GM10248 (cell line): ENCODE measurements at regions of chr22 and their contacts with region 1.

Region 1: GRCh38 chr22:29202212-29203192 is 3.2 kb upstream of the EMID1 start:
- DNase-seq: peak; percentile 91
- CTCF ChIP-seq: peak; percentile 49

Region 2: DNA sequence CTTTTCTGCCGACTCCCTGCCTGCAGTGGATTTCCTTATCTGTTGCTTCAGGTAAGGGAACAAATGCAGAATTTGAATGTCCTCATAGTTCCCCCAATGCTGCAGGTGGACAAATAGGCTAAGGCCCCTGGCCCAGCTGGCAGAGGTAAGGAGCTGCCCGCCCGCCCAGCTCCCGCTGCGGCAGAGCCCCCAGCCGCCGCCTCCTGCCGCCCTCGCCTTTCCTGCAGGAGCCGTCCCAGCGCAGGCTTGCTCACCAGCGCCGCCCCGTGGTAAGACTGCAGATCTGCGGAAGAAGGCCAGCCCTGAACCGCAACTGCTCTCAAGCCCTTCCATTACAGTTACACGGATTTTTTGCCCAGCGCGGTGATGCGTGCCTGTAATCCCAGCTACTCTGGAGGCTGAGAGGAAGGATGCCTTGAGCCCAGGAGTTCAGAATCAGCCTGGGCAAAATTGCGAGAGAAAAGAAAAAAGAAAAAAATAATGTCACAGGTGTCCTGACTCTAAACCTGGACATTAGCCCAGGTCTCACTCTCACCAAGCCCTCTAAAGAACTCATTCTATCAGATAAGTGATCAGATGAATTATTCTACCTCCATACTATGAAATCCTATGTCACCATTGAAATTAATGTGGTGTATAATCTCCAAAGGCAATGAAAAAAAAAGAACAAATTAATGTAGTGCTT is 48.0 kb before region 1 on chr22:
- CTCF ChIA-PET with region 1: interaction called, 37 read pairs
- POLR2A ChIA-PET with region 1: no interaction called
- DNase-seq: peak; percentile 88
- CTCF ChIP-seq: peak; percentile 99

Region 3: GRCh38 chr22:29190918-29191317 is 11.6 kb before region 1 on chr22:
- CTCF ChIA-PET with region 1: interaction called, 10 read pairs
- POLR2A ChIA-PET with region 1: interaction called, 6 read pairs
- DNase-seq: no peak
- CTCF ChIP-seq: no peak

Region 4: GRCh38 chr22:29216873-29217666 is 14.6 kb after region 1 on chr22:
- CTCF ChIA-PET with region 1: interaction called, 34 read pairs
- POLR2A ChIA-PET with region 1: no interaction called
- DNase-seq: no peak
- CTCF ChIP-seq: no peak

Region 5: GRCh38 chr22:29334696-29335344 is 132.3 kb after region 1 on chr22:
- CTCF ChIA-PET with region 1: no interaction called
- POLR2A ChIA-PET with region 1: no interaction called
- DNase-seq: no peak
- CTCF ChIP-seq: no peak